SK-N-SH (cell line): ENCODE measurements at regions of chr2 and their contacts with region 1.

Region 1: GRCh38 chr2:96554293-96555145 is 18.0 kb downstream of the ARID5A start:
- DNase-seq: peak; percentile 90
- H3K4me3 ChIP-seq: no peak overlapping the region; a peak in 1 of 4 replicates
- H3K27ac ChIP-seq: no peak overlapping the region
- H3K4me1 ChIP-seq: peaks cover 0 to 3% of the 10 kb centered on the region in 2 experiments; a peak in 1 of 4 replicates
- H3K27me3 ChIP-seq: no peaks in the 10 kb centered on the region
- CTCF ChIP-seq: peak; percentile 90
- EP300 ChIP-seq: no peak
- RAD21 ChIP-seq: peak; percentile 82

Region 2: GRCh38 chr2:96407041-96407918 is 147.2 kb before region 1 on chr2:
- CTCF ChIA-PET with region 1: interaction called, 91 read pairs
- POLR2A ChIA-PET with region 1: no interaction called
- DNase-seq: peak; percentile 79
- H3K4me3 ChIP-seq: peak overlapping the region in 1 of 2 experiments; percentile 34; a peak in 1 of 4 replicates
- H3K27ac ChIP-seq: no peak overlapping the region
- H3K4me1 ChIP-seq: peaks cover 0 to 10% of the 10 kb centered on the region in 2 experiments; a peak in 1 of 4 replicates
- H3K27me3 ChIP-seq: no peaks in the 10 kb centered on the region
- CTCF ChIP-seq: peak; percentile 80
- EP300 ChIP-seq: no peak
- RAD21 ChIP-seq: peak; percentile 75

Region 3: GRCh38 chr2:96527286-96528005 is 27.1 kb before region 1 on chr2:
- CTCF ChIA-PET with region 1: interaction called, 47 read pairs
- POLR2A ChIA-PET with region 1: no interaction called
- DNase-seq: peak; percentile 56
- H3K4me3 ChIP-seq: 0 out of 4 replicates have a peak overlapping the region, but pooled peaks of 1 of the 2 experiments have one; percentile 13
- H3K27ac ChIP-seq: no peak overlapping the region
- H3K4me1 ChIP-seq: peaks cover 11 to 12% of the 10 kb centered on the region in 2 experiments; a peak in 3 of 4 replicates
- H3K27me3 ChIP-seq: no peaks in the 10 kb centered on the region
- CTCF ChIP-seq: no peak
- EP300 ChIP-seq: no peak
- RAD21 ChIP-seq: no peak

Region 4: DNA sequence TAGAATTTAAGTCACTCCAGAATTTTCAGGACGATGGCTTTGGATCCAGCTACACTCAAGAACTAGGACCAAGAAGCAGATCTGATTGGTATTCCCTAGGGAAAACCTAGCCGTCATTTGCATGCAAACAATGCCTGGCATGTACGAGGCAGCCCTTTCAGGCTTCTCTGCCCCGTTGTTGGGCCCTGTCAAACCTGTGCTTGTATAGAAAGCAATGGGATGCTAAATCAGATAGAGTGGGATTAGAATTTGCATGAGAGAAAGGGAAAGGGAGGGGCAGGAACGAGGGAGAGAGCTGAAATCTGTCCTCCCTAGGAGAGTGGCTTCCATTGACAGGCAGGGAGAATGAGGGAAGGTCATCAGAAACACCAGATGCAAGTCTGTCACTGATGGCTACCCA is 10.6 kb after region 1 on chr2:
- CTCF ChIA-PET with region 1: interaction called, 34 read pairs
- POLR2A ChIA-PET with region 1: no interaction called
- DNase-seq: no peak
- H3K4me3 ChIP-seq: no peak overlapping the region
- H3K27ac ChIP-seq: no peak overlapping the region
- H3K4me1 ChIP-seq: no peaks in the 10 kb centered on the region
- H3K27me3 ChIP-seq: no peaks in the 10 kb centered on the region
- CTCF ChIP-seq: no peak
- EP300 ChIP-seq: no peak
- RAD21 ChIP-seq: no peak

Region 5: DNA sequence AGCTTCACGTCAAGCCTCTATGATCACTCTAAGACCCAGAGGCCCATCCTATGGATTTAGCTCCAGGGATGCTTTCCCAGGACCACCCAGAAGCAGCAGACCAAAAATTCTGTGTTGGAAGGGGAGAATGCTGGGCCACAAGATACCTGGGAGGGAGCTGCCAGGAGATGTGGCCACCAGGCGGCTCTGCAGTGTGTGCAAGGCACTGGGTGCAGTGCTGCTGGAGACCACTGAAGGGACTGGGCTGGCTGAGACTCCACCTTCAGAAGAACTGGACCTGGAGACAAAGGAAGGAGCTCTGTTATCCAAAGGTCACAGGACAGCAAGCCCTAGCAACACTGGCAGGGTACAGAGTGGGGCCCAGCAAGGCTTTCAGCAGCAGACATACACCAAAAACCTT is 49.6 kb after region 1 on chr2:
- CTCF ChIA-PET with region 1: interaction called, 10 read pairs
- POLR2A ChIA-PET with region 1: no interaction called
- DNase-seq: no peak
- H3K4me3 ChIP-seq: no peak overlapping the region
- H3K27ac ChIP-seq: no peak overlapping the region; a peak in 1 of 4 replicates
- H3K4me1 ChIP-seq: peaks cover 0 to 3% of the 10 kb centered on the region in 2 experiments; a peak in 2 of 4 replicates
- H3K27me3 ChIP-seq: no peaks in the 10 kb centered on the region
- CTCF ChIP-seq: peak; percentile 37
- EP300 ChIP-seq: no peak
- RAD21 ChIP-seq: no peak